BJ (cell line): ENCODE measurements at regions of chr3 and their contacts with region 1.

Region 1: GRCh38 chr3:40073310-40074007 is 236.0 kb upstream of the EIF1B start:
- DNase-seq: no peak
- H3K4me3 ChIP-seq: no peak overlapping the region
- H3K27me3 ChIP-seq: no peaks in the 10 kb centered on the region
- CTCF ChIP-seq: peak; percentile 21; the same call in 1 of the 2 replicates

Region 2: GRCh38 chr3:40108643-40109042 is 35.2 kb after region 1 on chr3:
- CTCF ChIA-PET with region 1: no interaction called
- POLR2A ChIA-PET with region 1: interaction called, 13 read pairs
- DNase-seq: no peak
- H3K4me3 ChIP-seq: no peak overlapping the region
- H3K27me3 ChIP-seq: no peaks in the 10 kb centered on the region
- CTCF ChIP-seq: no peak